MCF 10A (cell line): ENCODE measurements at regions of chr1 and their contacts with region 1.

Region 1: GRCh38 chr1:179002552-179003345 is 22.9 kb upstream of the FAM20B start:
- DNase-seq: peak; percentile 80
- H3K4me3 Mint-ChIP-seq: no peak overlapping the region
- H3K27ac Mint-ChIP-seq: peak overlapping the region; percentile 1
- H3K4me1 Mint-ChIP-seq: peaks cover 4% of the 10 kb centered on the region
- H3K27me3 Mint-ChIP-seq: no peaks in the 10 kb centered on the region
- CTCF ChIP-seq: peak; percentile 100

Region 2: GRCh38 chr1:178542560-178543356 is 460.0 kb before region 1 on chr1:
- CTCF ChIA-PET with region 1: interaction called, 328 read pairs
- POLR2A ChIA-PET with region 1: interaction called, 5 read pairs
- intact Hi-C with region 1: loop called (anchors 1 kb)
- DNase-seq: peak; percentile 89
- H3K4me3 Mint-ChIP-seq: peak overlapping the region; percentile 95
- H3K27ac Mint-ChIP-seq: peak overlapping the region; percentile 80
- H3K4me1 Mint-ChIP-seq: peaks cover 35% of the 10 kb centered on the region
- H3K27me3 Mint-ChIP-seq: no peaks in the 10 kb centered on the region
- CTCF ChIP-seq: peak; percentile 100

Region 3: DNA sequence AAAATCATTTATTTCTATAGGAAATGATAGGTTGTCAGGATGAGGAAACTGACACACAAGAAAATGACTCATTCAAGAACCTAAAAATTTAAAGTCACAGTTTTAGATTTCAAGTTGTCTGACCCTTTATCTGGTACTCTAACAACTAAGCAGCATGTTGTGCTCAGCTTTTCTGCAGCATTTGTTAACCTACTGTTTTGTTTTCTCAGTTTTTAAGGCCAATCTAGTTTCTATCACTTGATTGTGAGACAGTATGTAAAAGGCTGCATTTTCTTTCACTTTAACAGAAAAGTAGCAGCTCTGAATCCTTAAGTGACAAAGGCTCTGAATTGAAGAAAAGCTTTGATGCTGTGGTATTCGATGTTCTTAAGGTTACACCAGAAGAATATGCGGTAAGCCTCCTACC is 218.6 kb before region 1 on chr1:
- CTCF ChIA-PET with region 1: interaction called, 93 read pairs
- POLR2A ChIA-PET with region 1: no interaction called
- intact Hi-C with region 1: no loop called
- DNase-seq: peak; percentile 19
- H3K4me3 Mint-ChIP-seq: peak overlapping the region; percentile 1
- H3K27ac Mint-ChIP-seq: no peak overlapping the region
- H3K4me1 Mint-ChIP-seq: peaks cover 10% of the 10 kb centered on the region
- H3K27me3 Mint-ChIP-seq: no peaks in the 10 kb centered on the region
- CTCF ChIP-seq: no peak

Region 4: GRCh38 chr1:178849918-178850317 is 152.8 kb before region 1 on chr1:
- CTCF ChIA-PET with region 1: interaction called, 20 read pairs
- POLR2A ChIA-PET with region 1: interaction called, 3 read pairs
- intact Hi-C with region 1: no loop called
- DNase-seq: no peak
- H3K4me3 Mint-ChIP-seq: no peak overlapping the region
- H3K27ac Mint-ChIP-seq: no peak overlapping the region
- H3K4me1 Mint-ChIP-seq: no peaks in the 10 kb centered on the region
- H3K27me3 Mint-ChIP-seq: no peaks in the 10 kb centered on the region
- CTCF ChIP-seq: no peak

Region 5: DNA sequence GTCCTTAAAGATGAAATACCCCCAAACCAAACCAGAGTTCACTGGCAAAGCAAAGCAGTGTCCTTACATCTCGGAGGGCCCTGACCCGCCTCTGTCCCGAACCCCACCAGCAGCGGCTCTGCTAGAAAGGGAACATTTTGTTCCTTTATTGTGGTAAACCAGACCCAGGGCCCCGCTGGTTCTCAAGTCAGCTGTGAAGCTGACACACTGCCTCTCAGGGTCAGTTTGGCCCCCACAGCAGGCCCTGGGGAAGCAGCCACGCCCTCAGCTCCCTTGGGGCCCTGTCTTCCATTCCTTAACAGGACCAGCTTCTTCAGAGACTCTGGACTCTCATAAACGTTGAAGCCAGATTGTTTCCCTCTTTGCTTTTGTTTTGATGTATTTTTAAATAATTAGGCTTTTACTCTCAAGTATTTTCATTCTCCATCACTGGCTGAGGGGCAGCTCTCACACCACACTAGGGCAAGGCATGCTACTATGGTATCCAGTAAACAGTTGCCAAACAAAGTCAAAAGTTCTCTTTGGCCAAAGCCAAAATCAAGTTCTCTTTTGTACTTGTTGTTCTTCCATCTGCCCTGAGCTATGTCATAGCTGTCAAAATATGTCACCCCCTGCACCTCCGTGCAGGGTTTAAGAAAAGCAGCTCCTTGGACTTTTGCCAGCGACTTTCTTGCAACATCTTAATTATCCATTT is 70.7 kb before region 1 on chr1:
- CTCF ChIA-PET with region 1: interaction called, 16 read pairs
- POLR2A ChIA-PET with region 1: no interaction called
- intact Hi-C with region 1: no loop called
- DNase-seq: peak; percentile 52
- H3K4me3 Mint-ChIP-seq: no peak overlapping the region
- H3K27ac Mint-ChIP-seq: peak overlapping the region; percentile 55
- H3K4me1 Mint-ChIP-seq: peaks cover 4% of the 10 kb centered on the region
- H3K27me3 Mint-ChIP-seq: no peaks in the 10 kb centered on the region
- CTCF ChIP-seq: no peak

Region 6: GRCh38 chr1:179016747-179017549 is 14.2 kb after region 1 on chr1:
- CTCF ChIA-PET with region 1: interaction called, 63 read pairs
- POLR2A ChIA-PET with region 1: interaction called, 8 read pairs
- intact Hi-C with region 1: no loop called
- DNase-seq: peak; percentile 99
- H3K4me3 Mint-ChIP-seq: peak overlapping the region; percentile 26
- H3K27ac Mint-ChIP-seq: peak overlapping the region; percentile 54
- H3K4me1 Mint-ChIP-seq: peaks cover 29% of the 10 kb centered on the region
- H3K27me3 Mint-ChIP-seq: no peaks in the 10 kb centered on the region
- CTCF ChIP-seq: no peak

Region 7: DNA sequence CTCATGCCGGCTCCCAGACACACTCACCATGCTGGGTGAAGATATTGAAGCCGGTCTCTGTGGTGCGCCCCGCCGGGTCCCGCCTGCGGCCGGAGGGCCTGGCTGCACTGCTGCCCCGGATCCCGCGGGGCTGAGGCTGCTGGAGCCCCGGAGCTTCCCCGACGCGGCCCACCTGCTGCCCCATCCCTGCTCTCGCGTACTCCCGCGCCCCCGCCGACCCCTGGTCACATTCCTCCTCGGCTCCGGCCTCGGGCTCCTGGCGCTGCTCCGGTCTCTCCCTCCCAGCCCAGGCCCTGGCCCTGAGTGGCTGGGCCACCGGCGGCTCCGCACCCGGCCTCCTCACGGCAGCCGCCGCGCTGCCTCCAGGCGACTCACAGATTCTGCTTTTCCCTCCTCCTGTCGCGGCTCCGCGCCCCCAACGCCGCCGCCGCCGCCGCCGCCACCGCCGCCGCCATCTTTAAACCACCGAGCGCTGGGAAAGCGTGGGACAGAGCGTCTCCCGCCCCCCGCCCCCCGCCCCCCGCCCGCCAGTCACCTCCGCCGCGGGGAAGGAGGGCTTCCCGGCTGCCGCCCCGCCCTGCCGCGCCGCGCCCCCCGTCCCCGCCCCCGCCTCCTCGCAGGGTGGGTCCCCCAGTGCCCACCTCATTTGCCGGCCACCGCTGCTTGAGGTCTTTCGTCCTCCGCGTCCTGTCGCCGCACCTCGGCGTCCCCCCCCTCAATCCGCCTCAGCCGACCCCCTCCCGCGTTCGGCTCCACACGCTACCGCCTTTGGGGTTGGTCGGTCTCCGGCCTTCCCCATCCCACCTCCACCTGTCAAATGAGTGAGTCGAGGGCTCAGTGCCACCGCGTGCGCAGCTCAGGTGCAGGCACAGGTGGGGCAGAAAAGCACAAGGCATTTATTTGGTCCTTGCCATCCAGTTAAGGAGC is 226.7 kb after region 1 on chr1 and contains the start of gene ABL2:
- CTCF ChIA-PET with region 1: no interaction called
- POLR2A ChIA-PET with region 1: no interaction called
- intact Hi-C with region 1: no loop called
- DNase-seq: peak; percentile 49
- H3K4me3 Mint-ChIP-seq: peak within 1 kb of the TSS; percentile 80
- H3K27ac Mint-ChIP-seq: peak within 1 kb of the TSS; percentile 52
- H3K4me1 Mint-ChIP-seq: peaks cover 37% of the 10 kb centered on the region
- H3K27me3 Mint-ChIP-seq: no peaks in the 10 kb centered on the region
- CTCF ChIP-seq: no peak
- total RNA-seq, gene ABL2: 109 and 160 TPM in 2 replicates